WTC11 (cell line): ENCODE measurements at regions of chr4 and their contacts with region 1.

Region 1: GRCh38 chr4:25792200-25792791 is 70.5 kb downstream of the SEL1L3 start:
- DNase-seq: peak; percentile 67
- ATAC-seq: peak; percentile 86
- H3K4me3 Mint-ChIP-seq: no peak overlapping the region
- H3K27ac Mint-ChIP-seq: 0 out of 2 replicates have a peak overlapping the region, but pooled peaks have one; percentile 77
- H3K4me1 Mint-ChIP-seq: peaks cover 15% of the 10 kb centered on the region
- H3K27me3 Mint-ChIP-seq: no peaks in the 10 kb centered on the region
- CTCF ChIP-seq: peak; percentile 69

Region 2: DNA sequence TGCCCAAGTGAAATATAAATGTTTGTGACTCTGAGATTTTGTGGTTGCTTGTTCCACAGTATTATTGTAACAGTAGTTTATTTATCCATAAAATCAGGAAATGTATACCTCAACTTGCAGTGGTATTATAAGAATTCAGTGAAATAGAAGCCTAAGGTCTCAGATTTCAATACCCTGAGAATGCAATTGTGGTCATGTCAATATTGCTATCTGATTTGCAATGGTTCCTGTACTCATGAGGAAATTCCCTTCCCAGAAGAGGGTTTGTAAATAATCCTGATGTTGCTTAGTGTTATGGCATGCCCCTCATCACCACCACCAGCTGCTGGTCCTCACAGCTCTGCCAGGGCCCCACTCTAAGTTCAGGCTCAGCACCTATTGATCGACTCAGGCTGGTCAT is 68.9 kb before region 1 on chr4:
- CTCF ChIA-PET with region 1: no interaction called
- POLR2A ChIA-PET with region 1: no interaction called
- DNase-seq: no peak
- ATAC-seq: no peak; the same call in 1 of the 2 replicates
- H3K4me3 Mint-ChIP-seq: no peak overlapping the region
- H3K27ac Mint-ChIP-seq: no peak overlapping the region
- H3K4me1 Mint-ChIP-seq: no peaks in the 10 kb centered on the region
- H3K27me3 Mint-ChIP-seq: no peaks in the 10 kb centered on the region; the same call in 1 of the 2 replicates
- CTCF ChIP-seq: no peak

Region 3: DNA sequence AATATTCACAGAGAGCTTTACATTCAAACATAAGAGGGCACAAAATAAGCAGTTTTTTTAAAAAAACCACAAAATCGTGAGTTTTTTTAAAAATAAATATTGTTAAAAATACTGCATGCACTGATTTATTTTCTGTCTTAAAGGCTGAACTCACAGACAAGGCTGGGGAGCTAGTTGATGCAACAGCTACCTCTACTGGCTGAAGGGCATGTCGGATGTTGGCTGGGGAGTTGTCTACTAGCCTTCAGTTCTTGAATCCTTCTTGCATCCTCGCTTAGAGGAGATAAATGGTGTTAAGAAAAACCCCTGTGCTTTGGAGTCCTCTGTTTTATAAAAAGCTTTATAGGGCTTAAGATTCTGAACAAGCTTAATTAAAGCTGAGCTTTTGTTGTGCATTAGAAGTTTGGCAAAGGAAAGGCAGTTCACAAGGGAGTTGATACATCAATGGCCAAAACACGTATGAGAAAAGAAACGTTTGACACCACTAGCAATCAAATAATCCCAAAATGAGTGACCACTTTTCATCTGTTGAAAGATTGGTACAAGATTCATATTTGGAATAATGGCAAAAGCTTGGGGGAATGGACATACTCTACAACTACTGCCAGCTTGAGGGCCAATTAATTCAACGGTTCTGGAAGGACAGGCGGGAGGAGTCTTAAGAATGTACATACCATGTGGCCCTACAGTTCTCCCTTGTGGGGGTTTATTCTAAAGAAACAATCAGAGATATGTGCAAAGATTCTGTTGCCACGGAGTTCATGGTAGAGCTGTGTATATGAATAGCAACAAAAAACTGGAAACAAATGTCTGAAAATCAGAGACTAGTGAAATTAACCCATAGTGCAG is 24.2 kb before region 1 on chr4:
- CTCF ChIA-PET with region 1: interaction called, 10 read pairs
- POLR2A ChIA-PET with region 1: no interaction called
- DNase-seq: peak; percentile 62
- ATAC-seq: peak; percentile 75
- H3K4me3 Mint-ChIP-seq: no peak overlapping the region
- H3K27ac Mint-ChIP-seq: no peak overlapping the region
- H3K4me1 Mint-ChIP-seq: no peaks in the 10 kb centered on the region
- H3K27me3 Mint-ChIP-seq: no peaks in the 10 kb centered on the region
- CTCF ChIP-seq: no peak

Region 4: DNA sequence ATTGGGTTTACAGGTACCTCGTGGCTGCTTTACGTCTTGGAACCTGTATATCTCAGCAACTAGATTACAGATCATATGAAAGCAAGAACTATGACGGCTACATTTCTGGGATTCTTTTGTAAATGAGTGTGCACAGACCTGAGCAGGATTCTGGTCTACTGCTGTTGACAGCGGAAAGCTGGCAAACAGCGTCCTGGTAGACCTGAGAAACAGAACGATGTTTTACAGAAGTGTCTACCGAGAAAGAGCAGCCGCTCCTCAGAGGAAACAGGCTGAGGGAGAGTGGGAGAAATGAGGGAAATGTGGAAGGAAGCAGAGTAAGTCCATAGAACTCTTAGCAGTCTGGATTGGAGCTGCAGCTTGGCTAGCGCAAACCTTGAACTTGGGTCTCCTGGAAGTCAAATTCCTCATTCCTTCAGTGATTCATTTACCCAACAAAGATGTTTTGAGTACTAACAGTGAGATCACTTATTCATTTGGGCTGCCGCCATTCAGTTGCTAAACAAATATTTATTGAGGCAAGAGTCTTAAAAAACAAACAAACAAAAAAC is 18.9 kb after region 1 on chr4:
- CTCF ChIA-PET with region 1: interaction called, 10 read pairs
- POLR2A ChIA-PET with region 1: interaction called, 4 read pairs
- DNase-seq: no peak
- ATAC-seq: no peak
- H3K4me3 Mint-ChIP-seq: no peak overlapping the region
- H3K27ac Mint-ChIP-seq: no peak overlapping the region; the same call in 1 of the 2 replicates
- H3K4me1 Mint-ChIP-seq: peaks cover 52% of the 10 kb centered on the region
- H3K27me3 Mint-ChIP-seq: peaks cover 29% of the 10 kb centered on the region
- CTCF ChIP-seq: no peak

Region 5: DNA sequence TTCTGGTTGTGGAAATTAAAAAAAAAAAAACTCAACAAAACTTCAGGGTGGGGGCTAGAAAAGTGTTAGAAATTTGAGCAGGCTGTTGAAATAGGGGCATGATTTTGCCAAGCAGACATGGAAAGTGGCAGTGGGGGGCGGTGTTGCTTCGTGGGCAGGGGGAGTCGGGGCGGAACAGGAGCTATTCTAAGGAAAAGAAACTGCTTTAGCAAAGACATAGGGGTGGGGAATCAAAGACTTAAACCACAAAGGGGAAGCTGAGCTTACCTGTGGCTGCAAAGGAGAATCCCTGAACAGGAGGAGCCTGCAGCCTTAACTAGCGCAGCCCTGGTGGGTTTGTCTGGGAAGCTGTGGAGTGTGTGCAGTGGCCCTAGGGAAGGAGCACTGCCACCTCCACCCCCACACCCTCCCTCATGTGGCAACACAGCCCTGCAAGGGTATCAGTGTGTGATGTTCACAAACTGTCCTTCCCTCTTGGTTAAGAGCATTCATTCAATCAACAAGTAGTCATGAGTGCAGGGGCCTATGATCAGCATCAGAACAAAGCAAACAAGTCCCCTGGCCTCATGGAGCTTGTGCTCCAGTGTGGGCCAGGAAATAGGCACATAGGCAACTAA is 50.0 kb after region 1 on chr4:
- CTCF ChIA-PET with region 1: interaction called, 12 read pairs
- POLR2A ChIA-PET with region 1: no interaction called
- DNase-seq: peak; percentile 55
- ATAC-seq: peak; percentile 70
- H3K4me3 Mint-ChIP-seq: no peak overlapping the region
- H3K27ac Mint-ChIP-seq: peak overlapping the region; percentile 90
- H3K4me1 Mint-ChIP-seq: peaks cover 54% of the 10 kb centered on the region
- H3K27me3 Mint-ChIP-seq: no peaks in the 10 kb centered on the region
- CTCF ChIP-seq: no peak